ENCODE measurements at regions of chr11 and their contacts with region 1.

Region 1: GRCh38 chr11:104352036-104352435 is 188.1 kb upstream of the PDGFD start:
- DNase-seq: peak; percentile 89
- ATAC-seq: peak; percentile 98
- H3K4me3 ChIP-seq: no peak overlapping the region
- H3K27ac ChIP-seq: peak overlapping the region; percentile 4; the same call in 1 of the 2 replicates
- H3K4me1 ChIP-seq: peaks cover 7% of the 10 kb centered on the region
- H3K27me3 ChIP-seq: no peaks in the 10 kb centered on the region
- CTCF ChIP-seq: no peak

Region 2: DNA sequence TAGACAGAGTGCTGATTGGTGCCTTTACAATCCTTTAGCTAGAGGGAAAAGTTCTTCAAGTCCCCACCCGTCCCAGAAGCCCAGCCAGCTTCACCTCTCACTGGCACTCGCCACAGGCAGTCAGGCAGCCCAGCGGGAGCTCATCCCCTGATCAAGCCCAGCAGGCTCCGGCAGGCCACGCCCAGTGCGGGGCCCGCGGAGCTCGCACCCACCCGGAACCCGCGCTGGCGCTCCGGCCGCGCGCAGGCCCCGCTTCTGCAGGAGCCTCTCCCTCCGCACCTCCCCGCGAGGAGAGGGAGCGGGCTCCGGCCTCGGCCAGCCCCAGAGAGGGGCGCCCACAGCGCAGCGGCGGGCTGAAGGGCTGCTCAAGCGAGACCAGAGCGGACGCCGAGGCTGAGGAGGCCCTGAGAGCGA is 14.3 kb after region 1 on chr11:
- CTCF ChIA-PET with region 1: no interaction called
- POLR2A ChIA-PET with region 1: no interaction called
- intact Hi-C with region 1: no loop called
- DNase-seq: no peak
- ATAC-seq: no peak
- H3K4me3 ChIP-seq: no peak overlapping the region
- H3K27ac ChIP-seq: no peak overlapping the region
- H3K4me1 ChIP-seq: no peaks in the 10 kb centered on the region
- H3K27me3 ChIP-seq: no peaks in the 10 kb centered on the region
- CTCF ChIP-seq: no peak

Region 3: GRCh38 chr11:104581246-104581980 is 229.4 kb after region 1 on chr11:
- CTCF ChIA-PET with region 1: no interaction called
- POLR2A ChIA-PET with region 1: no interaction called
- intact Hi-C with region 1: loop called (anchors 1 kb)
- DNase-seq: peak; percentile 79
- ATAC-seq: peak; percentile 86
- H3K4me3 ChIP-seq: peak overlapping the region; percentile 41
- H3K27ac ChIP-seq: peak overlapping the region; percentile 33
- H3K4me1 ChIP-seq: peaks cover 24% of the 10 kb centered on the region
- H3K27me3 ChIP-seq: no peaks in the 10 kb centered on the region
- CTCF ChIP-seq: no peak

Measured in PC-3 (cell line).